ENCODE measurements at regions of chr5 and their contacts with region 1.

Region 1: DNA sequence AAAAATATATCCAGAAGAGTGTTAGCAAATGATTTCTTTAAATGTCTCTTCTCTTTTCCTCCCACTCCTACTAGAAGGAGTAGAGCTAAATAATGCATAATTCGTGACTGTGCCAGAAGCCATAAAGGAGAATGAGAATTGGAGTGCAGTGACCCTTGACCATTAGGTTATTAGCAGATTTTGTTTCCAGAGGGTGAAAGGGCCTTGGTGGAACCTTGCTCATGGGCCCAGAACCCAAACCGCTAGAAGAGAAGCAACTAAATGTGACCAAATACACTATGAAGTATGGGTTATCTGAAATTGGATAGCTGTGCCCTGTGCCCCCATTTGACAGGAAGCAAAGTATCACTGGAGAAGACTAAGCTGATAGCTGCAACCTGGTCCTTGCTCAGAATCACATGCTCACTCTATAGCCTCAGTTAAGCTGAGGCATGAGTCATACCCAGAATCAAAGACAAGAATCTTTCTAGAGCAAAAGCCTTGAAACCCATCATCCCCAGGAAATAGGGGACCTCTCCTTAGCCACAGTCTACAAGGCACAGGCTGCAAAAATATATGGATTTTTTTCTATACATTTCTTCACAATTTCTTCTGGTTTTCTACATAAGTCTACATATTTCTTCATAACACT is 36.3 kb downstream of the CAPSL start:
- DNase-seq: peak; percentile 65
- ATAC-seq: peak; percentile 93
- H3K4me3 Mint-ChIP-seq: no peak overlapping the region
- H3K27ac Mint-ChIP-seq: peak overlapping the region; percentile 65
- H3K4me1 Mint-ChIP-seq: peaks cover 68% of the 10 kb centered on the region
- H3K27me3 Mint-ChIP-seq: no peaks in the 10 kb centered on the region

Region 2: DNA sequence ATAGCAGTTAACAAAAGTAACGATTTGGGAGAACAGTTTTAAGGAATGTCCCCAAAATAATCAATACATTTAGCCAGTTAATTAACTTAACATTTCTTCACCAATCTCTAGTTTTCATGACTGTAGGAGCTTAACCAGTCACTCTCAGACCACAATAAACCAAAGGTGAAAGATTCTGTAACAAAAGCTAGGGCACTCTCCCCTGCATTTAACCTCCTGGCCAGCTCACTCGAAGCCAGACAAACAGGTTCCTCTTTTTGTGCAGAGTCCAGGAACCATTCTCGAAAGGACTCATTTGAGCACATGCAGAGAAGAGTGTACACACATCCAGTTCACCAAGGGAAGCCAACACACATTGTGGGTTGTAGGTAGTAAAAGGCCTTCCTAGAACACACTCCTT is 39.0 kb before region 1 on chr5:
- CTCF ChIA-PET with region 1: interaction called, 10 read pairs
- POLR2A ChIA-PET with region 1: interaction called, 5 read pairs
- DNase-seq: no peak
- ATAC-seq: peak; percentile 29
- H3K4me3 Mint-ChIP-seq: peak overlapping the region; percentile 41
- H3K27ac Mint-ChIP-seq: peak overlapping the region; percentile 41
- H3K4me1 Mint-ChIP-seq: peaks cover 74% of the 10 kb centered on the region
- H3K27me3 Mint-ChIP-seq: no peaks in the 10 kb centered on the region

Region 3: GRCh38 chr5:35881758-35882157 is 20.4 kb before region 1 on chr5:
- CTCF ChIA-PET with region 1: interaction called, 19 read pairs
- POLR2A ChIA-PET with region 1: interaction called, 6 read pairs
- DNase-seq: no peak
- ATAC-seq: no peak
- H3K4me3 Mint-ChIP-seq: no peak overlapping the region
- H3K27ac Mint-ChIP-seq: no peak overlapping the region
- H3K4me1 Mint-ChIP-seq: peaks cover 58% of the 10 kb centered on the region
- H3K27me3 Mint-ChIP-seq: no peaks in the 10 kb centered on the region

Region 4: GRCh38 chr5:36202521-36202961 is 300.4 kb after region 1 on chr5:
- CTCF ChIA-PET with region 1: no interaction called
- POLR2A ChIA-PET with region 1: no interaction called
- DNase-seq: no peak
- ATAC-seq: no peak
- H3K4me3 Mint-ChIP-seq: no peak overlapping the region
- H3K27ac Mint-ChIP-seq: no peak overlapping the region
- H3K4me1 Mint-ChIP-seq: no peaks in the 10 kb centered on the region
- H3K27me3 Mint-ChIP-seq: no peaks in the 10 kb centered on the region

Measured in activated CD8-positive, alpha-beta T cell treated with anti-CD3 and anti-CD28 coated beads, Interleukin-2, amount 10 ng/mL, durations not matched to agents 7 days and 5 days (primary cell).